Activated CD8-positive, alpha-beta T cell treated with anti-CD3 and anti-CD28 coated beads for 36 hours (primary cell): ENCODE measurements at regions of chr22 and their contacts with region 1.

Region 1: GRCh38 chr22:31496007-31496734 is at the start of gene SFI1:
- DNase-seq: peak; percentile 97
- ATAC-seq: peak; percentile 88
- H3K4me3 Mint-ChIP-seq: peak within 1 kb of the TSS; percentile 96
- H3K27ac Mint-ChIP-seq: peak within 1 kb of the TSS; percentile 90
- H3K4me1 Mint-ChIP-seq: peaks cover 47% of the 10 kb centered on the region
- H3K27me3 Mint-ChIP-seq: no peaks in the 10 kb centered on the region
- CTCF ChIP-seq: peak; percentile 24
- total RNA-seq, gene SFI1: 273 to 274 TPM

Region 2: GRCh38 chr22:31537019-31537535 is 40.9 kb after region 1 on chr22:
- CTCF ChIA-PET with region 1: interaction called, 3 read pairs
- POLR2A ChIA-PET with region 1: interaction called, 7 read pairs
- intact Hi-C with region 1: loop called (anchors 5 kb)
- DNase-seq: peak; percentile 81
- ATAC-seq: peak; percentile 85
- H3K4me3 Mint-ChIP-seq: peak overlapping the region; percentile 0
- H3K27ac Mint-ChIP-seq: peak overlapping the region; percentile 97
- H3K4me1 Mint-ChIP-seq: peaks cover 68% of the 10 kb centered on the region
- H3K27me3 Mint-ChIP-seq: no peaks in the 10 kb centered on the region
- CTCF ChIP-seq: no peak